Transverse colon (tissue), 4 donors: ENCODE measurements at regions of chr5 and their contacts with region 1.

Region 1: DNA sequence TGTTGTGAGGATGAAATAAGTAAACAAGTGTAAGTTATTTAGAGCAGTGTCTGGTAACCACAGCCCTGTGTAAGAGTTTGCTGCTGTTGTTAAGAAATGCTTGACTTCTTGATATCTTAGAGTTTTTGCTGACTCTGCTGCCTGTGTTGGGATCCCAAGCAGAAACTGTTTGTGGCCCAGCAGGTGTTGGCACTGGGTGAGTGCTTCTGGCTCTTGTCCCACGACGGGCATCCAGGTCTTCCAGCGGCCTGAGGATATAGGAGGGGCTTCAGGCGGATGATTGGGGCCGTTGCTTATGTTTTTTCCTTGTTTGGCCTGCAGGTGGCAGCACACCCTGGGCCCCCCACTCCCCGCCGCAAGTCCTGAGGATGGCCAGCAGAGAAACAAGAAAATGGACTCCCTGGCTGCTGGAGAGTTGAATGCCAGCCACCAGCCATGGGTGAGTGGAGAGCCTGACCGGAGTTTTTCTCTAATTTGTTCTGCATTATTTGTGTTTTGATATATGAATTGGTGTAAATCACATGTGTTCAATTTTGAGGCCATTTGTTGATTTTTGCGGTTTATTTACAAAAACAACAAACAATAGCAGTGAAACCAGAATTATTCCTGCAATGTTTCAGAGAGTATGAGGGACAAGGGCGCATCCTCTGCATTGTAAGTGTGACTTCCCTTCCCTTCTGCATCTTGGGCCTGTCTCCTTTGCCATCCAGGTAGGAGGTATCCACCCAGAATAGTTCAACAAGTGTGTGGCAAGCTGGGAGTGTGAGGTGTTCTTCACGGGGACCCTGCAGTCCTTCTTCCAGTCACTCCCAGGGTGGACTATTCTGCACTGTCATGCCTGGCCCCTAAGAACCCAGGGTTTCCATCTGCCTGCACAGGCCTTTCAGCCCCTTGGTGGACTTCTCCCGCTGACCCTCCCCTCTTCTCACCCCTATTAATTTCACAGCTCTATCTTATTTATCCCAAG is 50.3 kb downstream of the SLC22A5 start:
- DNase-seq: peak; percentile 77
- H3K4me3 ChIP-seq: no peak overlapping the region
- H3K27ac ChIP-seq: peak overlapping the region; percentile 96 to 99 (median 99)
- H3K4me1 ChIP-seq: peaks cover 58 to 94% (median 76%) of the 10 kb centered on the region in 4 donors
- H3K27me3 ChIP-seq: no peaks in the 10 kb centered on the region
- CTCF ChIP-seq: peak; percentile 84 to 98 (median 89)
- EP300 ChIP-seq: no peak
- POLR2A ChIP-seq: no peak

Region 2: GRCh38 chr5:132437604-132438266 is 17.9 kb after region 1 on chr5:
- in situ Hi-C with region 1: no loop called
- intact Hi-C with region 1: no loop called
- DNase-seq: peak; percentile 84
- H3K4me3 ChIP-seq: no peak overlapping the region
- H3K27ac ChIP-seq: peak overlapping the region; percentile 70 to 96 (median 82)
- H3K4me1 ChIP-seq: peaks cover 46 to 77% (median 64%) of the 10 kb centered on the region in 4 donors
- H3K27me3 ChIP-seq: no peaks in the 10 kb centered on the region
- CTCF ChIP-seq: no peak
- EP300 ChIP-seq: no peak
- POLR2A ChIP-seq: no peak

Region 3: GRCh38 chr5:132473019-132473531 is 53.3 kb after region 1 on chr5:
- in situ Hi-C with region 1: loop called in 2 of 4 experiments (anchors 5 to 10 kb)
- intact Hi-C with region 1: no loop called
- DNase-seq: peak; percentile 76
- H3K4me3 ChIP-seq: no peak overlapping the region
- H3K27ac ChIP-seq: peak overlapping the region in 3 of 4 donors; percentile 45 to 82 (median 64)
- H3K4me1 ChIP-seq: peaks cover 29 to 56% (median 33%) of the 10 kb centered on the region in 4 donors
- H3K27me3 ChIP-seq: no peaks in the 10 kb centered on the region
- CTCF ChIP-seq: no peak
- EP300 ChIP-seq: no peak
- POLR2A ChIP-seq: peak; percentile 10

Region 4: GRCh38 chr5:132490486-132491367 is 70.9 kb after region 1 on chr5 and contains the start of gene IRF1:
- in situ Hi-C with region 1: loop called in 3 of 4 experiments (anchors 5 to 10 kb)
- intact Hi-C with region 1: loop called (anchors 5 kb)
- DNase-seq: peak; percentile 98
- H3K4me3 ChIP-seq: peak within 1 kb of the TSS; percentile 80 to 96 (median 90)
- H3K27ac ChIP-seq: peak within 1 kb of the TSS; percentile 98 to 100 (median 100)
- H3K4me1 ChIP-seq: peaks cover 43 to 67% (median 51%) of the 10 kb centered on the region in 4 donors
- H3K27me3 ChIP-seq: no peaks in the 10 kb centered on the region
- CTCF ChIP-seq: no peak
- EP300 ChIP-seq: peak; percentile 76
- POLR2A ChIP-seq: peak; percentile 99
- total RNA-seq, gene IRF1: 40.8 to 86.9 (median 65.5) TPM

Region 5: DNA sequence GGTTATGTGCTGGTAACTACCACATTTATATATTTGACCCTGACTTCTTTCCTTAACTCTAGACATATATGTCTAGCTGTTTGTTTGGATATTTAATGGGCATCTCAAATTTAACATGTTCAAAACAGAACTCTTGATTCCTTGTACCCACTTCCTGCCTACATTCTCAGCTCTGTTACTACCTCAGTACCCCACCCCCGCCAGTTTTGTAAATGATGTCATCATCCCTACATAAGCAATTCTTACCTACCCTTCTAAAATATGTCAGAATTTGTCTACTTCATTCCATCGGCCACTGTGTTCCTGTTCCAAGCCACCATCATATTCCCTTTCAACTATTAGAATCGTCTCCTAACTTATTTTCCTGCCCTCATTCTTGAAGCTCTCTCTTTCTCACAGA is 141.8 kb after region 1 on chr5:
- in situ Hi-C with region 1: no loop called
- intact Hi-C with region 1: no loop called
- DNase-seq: no peak
- H3K4me3 ChIP-seq: no peak overlapping the region
- H3K27ac ChIP-seq: no peak overlapping the region
- H3K4me1 ChIP-seq: peaks cover 6 to 21% (median 19%) of the 10 kb centered on the region in 4 donors
- H3K27me3 ChIP-seq: no peaks in the 10 kb centered on the region
- CTCF ChIP-seq: no peak
- EP300 ChIP-seq: no peak
- POLR2A ChIP-seq: no peak